A673 (cell line): ENCODE measurements at regions of chr10 and their contacts with region 1.

Region 1: GRCh38 chr10:71396084-71396720 is 518 bp upstream of the CDH23 start:
- DNase-seq: peak; percentile 86
- H3K4me3 ChIP-seq: peak overlapping the region; percentile 67
- H3K27ac ChIP-seq: peak overlapping the region; percentile 63
- H3K4me1 ChIP-seq: peaks cover 10% of the 10 kb centered on the region
- H3K27me3 ChIP-seq: no peaks in the 10 kb centered on the region
- CTCF ChIP-seq: peak; percentile 71

Region 2: GRCh38 chr10:71486484-71487114 is 90.4 kb after region 1 on chr10:
- CTCF ChIA-PET with region 1: no interaction called
- POLR2A ChIA-PET with region 1: no interaction called
- intact Hi-C with region 1: no loop called
- DNase-seq: peak; percentile 30
- H3K4me3 ChIP-seq: no peak overlapping the region
- H3K27ac ChIP-seq: no peak overlapping the region
- H3K4me1 ChIP-seq: no peaks in the 10 kb centered on the region
- H3K27me3 ChIP-seq: no peaks in the 10 kb centered on the region
- CTCF ChIP-seq: peak; percentile 52

Region 3: DNA sequence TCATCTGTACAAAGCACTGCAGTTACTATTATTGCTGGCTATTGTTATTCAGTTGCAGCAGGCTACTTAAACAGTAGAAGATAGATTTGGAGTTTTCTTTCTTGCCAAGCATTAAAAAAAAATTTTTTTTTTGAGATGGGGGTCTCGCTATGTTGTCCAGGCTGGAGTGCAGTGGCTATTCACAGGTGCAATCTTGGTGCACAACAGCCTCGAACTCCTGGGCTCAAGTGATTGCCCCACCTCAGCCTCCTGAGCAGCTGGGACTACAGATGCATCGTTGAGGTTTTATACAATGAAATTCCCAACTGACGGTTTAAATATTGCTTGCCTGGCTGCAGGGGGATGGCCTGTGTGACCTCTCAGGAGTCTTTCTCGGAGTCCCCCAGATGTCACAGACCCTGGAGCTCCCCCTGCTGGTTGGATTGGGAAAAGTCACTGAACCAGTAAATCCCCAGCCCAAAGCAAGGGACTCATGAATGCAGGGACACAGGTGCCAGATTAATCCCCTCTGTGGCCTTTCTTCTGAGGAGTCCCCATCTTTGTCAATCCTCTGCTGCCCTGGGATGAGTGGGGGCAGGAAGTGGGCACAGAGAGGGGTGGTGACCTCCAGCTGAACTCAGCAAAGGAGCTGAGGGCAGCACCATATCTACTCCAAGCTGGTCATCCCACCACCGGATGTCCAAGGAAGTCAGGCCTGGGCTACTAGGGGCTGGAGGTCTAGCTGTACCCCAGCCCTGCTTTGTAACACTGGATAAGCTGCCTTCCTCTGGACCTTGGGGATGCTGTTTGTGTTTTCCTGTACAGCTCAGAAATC is 173.8 kb after region 1 on chr10:
- CTCF ChIA-PET with region 1: interaction called, 22 read pairs
- POLR2A ChIA-PET with region 1: no interaction called
- intact Hi-C with region 1: loop called (anchors 1 kb)
- DNase-seq: peak; percentile 73
- H3K4me3 ChIP-seq: no peak overlapping the region
- H3K27ac ChIP-seq: no peak overlapping the region
- H3K4me1 ChIP-seq: peaks cover 1% of the 10 kb centered on the region
- H3K27me3 ChIP-seq: no peaks in the 10 kb centered on the region
- CTCF ChIP-seq: peak; percentile 84